Mammary epithelial cell (primary cell): ENCODE measurements at regions of chr18 and their contacts with region 1.

Region 1: GRCh38 chr18:12366379-12366778 is 10.6 kb downstream of the AFG3L2 start:
- DNase-seq: no peak
- H3K4me3 ChIP-seq: no peak overlapping the region
- H3K27ac ChIP-seq: no peak overlapping the region
- H3K4me1 ChIP-seq: no peaks in the 10 kb centered on the region
- H3K27me3 ChIP-seq: no peaks in the 10 kb centered on the region
- CTCF ChIP-seq: no peak

Region 2: DNA sequence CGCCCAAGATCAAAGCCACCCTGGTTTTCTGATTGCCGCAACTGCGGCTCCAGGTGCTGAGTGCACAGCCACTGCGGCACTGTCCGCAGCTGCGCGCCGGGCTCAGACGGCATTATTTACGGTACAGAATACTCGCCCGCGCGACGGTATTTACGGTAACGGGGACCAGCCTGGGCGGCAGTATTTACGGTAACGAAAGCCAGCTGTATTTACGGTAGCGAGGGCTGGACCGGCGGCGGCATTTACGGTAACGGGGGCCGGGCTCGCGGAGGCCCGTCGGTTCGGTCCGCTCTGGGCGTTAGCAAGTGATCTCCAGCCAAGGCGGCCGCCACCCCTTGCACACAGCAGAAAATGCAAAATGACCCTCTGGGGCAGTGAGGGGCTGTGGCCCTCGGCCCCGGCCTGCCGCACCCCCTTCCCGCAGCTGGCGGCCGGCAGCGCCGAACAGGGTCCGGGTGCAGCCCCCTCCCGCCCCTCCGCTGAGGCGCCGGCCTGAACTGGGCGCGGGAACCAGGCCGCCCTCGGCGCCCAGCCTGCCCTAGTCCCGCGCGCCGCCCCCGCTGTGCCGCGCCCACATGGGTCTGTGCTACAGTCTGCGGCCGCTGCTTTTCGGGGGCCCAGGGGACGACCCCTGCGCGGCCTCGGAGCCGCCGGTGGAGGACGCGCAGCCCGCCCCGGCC is 677.2 kb before region 1 on chr18 and contains the start of gene GNAL:
- CTCF ChIA-PET with region 1: no interaction called
- dilution Hi-C with region 1: no loop called
- in situ Hi-C with region 1: no loop called
- intact Hi-C with region 1: no loop called
- DNase-seq: peak; percentile 80
- H3K4me3 ChIP-seq: peak within 1 kb of the TSS; percentile 54 to 90 (median 81)
- H3K27ac ChIP-seq: peak within 1 kb of the TSS; percentile 2
- H3K4me1 ChIP-seq: peaks cover 4% of the 10 kb centered on the region
- H3K27me3 ChIP-seq: no peaks in the 10 kb centered on the region
- CTCF ChIP-seq: no peak
- total RNA-seq, gene GNAL: 35.0 to 40.8 TPM

Region 3: DNA sequence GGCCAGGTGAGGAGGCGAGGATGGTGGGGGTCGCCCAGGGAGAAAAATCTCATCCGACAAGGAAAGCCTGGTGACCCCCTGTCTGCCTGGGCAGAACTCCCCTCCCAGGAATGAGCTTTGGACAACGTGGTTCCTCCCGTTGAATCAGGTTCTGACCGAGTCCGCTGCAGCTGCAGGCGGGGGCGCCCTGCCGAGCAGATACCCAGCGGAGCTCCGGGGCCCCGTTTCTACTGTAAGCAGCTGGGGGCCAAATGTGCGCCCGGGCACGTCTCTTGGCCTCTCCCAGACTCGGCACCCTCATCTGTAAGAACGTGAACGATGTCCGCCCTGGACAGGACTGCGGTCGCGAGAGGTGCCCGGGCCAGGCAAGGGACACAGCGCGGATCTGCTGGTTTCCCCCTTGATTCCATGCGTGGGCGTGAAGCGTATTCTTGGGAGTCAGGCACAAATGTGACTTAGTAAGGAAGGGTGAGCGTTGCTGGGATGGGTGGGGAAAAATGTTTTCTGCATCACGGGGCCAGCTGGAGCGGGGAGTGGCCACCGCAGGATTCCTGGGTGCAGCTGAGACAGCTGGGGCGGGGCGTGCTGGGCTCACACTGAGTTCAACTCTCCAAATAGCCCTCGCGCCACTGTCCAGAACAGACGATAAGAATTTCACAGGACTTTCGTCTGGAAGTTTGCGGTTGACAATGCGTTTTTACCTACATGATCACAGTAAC is 78.5 kb before region 1 on chr18:
- CTCF ChIA-PET with region 1: no interaction called
- dilution Hi-C with region 1: loop called (anchors 5 kb)
- in situ Hi-C with region 1: no loop called
- intact Hi-C with region 1: no loop called
- DNase-seq: peak; percentile 98
- H3K4me3 ChIP-seq: peak overlapping the region; percentile 46 to 67 (median 58)
- H3K27ac ChIP-seq: peak overlapping the region; percentile 97
- H3K4me1 ChIP-seq: peaks cover 30% of the 10 kb centered on the region
- H3K27me3 ChIP-seq: no peaks in the 10 kb centered on the region
- CTCF ChIP-seq: peak in 1 of 2 donors; percentile 13

Region 4: GRCh38 chr18:12333506-12334279 is 32.7 kb before region 1 on chr18:
- CTCF ChIA-PET with region 1: no interaction called
- dilution Hi-C with region 1: loop called (anchors 5 kb)
- in situ Hi-C with region 1: no loop called
- intact Hi-C with region 1: no loop called
- DNase-seq: no peak
- H3K4me3 ChIP-seq: no peak overlapping the region
- H3K27ac ChIP-seq: no peak overlapping the region
- H3K4me1 ChIP-seq: peaks cover 14% of the 10 kb centered on the region
- H3K27me3 ChIP-seq: no peaks in the 10 kb centered on the region
- CTCF ChIP-seq: no peak

Region 5: GRCh38 chr18:12497291-12497690 is 130.9 kb after region 1 on chr18:
- CTCF ChIA-PET with region 1: no interaction called
- dilution Hi-C with region 1: no loop called
- in situ Hi-C with region 1: no loop called
- intact Hi-C with region 1: no loop called
- DNase-seq: peak; percentile 7
- H3K4me3 ChIP-seq: no peak overlapping the region
- H3K27ac ChIP-seq: no peak overlapping the region
- H3K4me1 ChIP-seq: no peaks in the 10 kb centered on the region
- H3K27me3 ChIP-seq: no peaks in the 10 kb centered on the region
- CTCF ChIP-seq: no peak